ENCODE measurements at regions of chr4 and their contacts with region 1.

Region 1: GRCh38 chr4:166091912-166092510 is 219.0 kb downstream of the TLL1 start:
- ATAC-seq: peak in 4 of 8 experiments; percentile 27 to 50 (median 30)
- H3K4me3 ChIP-seq: no peak overlapping the region
- H3K27ac ChIP-seq: no peak overlapping the region
- H3K4me1 ChIP-seq: peaks cover 0 to 5% of the 10 kb centered on the region in 2 donors

Region 2: DNA sequence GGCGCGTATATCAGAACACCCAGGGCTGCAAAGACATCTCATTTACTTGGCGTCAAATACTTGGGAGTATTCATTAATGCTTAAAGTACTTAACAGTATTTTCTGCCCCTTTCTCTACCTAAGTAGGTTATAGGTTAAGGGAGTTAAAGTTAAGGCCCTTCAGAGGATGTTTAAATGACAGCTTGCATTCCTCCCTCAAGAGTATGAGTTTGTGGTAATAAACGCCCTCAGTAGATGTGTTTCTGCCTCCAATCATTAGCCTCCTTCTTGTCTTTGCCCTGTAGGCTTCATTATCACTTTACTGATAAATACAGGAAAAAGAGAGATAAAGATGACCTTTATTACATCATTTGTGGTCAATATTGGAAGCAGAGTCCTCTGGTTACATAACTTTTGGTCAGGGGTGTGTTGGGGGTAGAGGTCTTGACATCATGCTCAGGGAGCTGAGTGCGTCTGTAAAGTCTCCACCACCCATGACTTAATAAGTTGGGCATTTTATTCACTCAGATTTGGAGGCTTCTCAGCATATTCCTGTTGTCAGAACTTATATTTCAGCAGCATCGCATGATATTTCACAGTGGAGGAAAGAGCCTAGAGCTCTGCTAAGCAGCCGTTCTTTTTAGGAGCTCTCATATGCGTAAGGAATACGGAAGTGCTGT is 567.4 kb before region 1 on chr4:
- in situ Hi-C with region 1: loop called in 5 of 9 experiments (anchors 10 to 25 kb)
- ATAC-seq: no peak
- H3K4me3 ChIP-seq: no peak overlapping the region
- H3K27ac ChIP-seq: no peak overlapping the region
- H3K4me1 ChIP-seq: no peaks in the 10 kb centered on the region

Region 3: GRCh38 chr4:165537028-165537648 is 554.9 kb before region 1 on chr4:
- in situ Hi-C with region 1: loop called in 8 of 9 experiments (anchors 10 to 25 kb)
- ATAC-seq: peak in 2 of 8 experiments; percentile 25 to 47
- H3K4me3 ChIP-seq: no peak overlapping the region
- H3K27ac ChIP-seq: no peak overlapping the region
- H3K4me1 ChIP-seq: no peaks in the 10 kb centered on the region

Region 4: DNA sequence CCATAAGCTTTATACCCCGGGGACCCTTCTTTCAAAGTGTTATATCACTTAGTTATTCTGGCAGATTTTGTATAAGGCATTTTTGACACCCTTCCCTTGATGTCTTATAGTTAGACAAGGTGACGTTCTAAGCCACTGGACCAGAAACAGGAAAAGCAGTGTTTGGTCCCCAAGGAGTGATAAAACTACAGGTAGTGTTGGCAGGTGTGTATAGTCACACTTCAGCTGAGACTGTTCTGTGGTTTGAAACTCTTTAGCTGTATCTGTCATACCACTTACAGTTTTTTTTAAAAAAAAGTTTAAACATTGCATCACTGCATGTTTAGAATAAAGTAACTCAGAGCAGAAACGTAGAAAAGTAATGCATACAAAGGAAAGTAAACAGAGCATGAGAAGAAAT is 170.5 kb before region 1 on chr4:
- in situ Hi-C with region 1: no loop called
- ATAC-seq: no peak
- H3K4me3 ChIP-seq: no peak overlapping the region
- H3K27ac ChIP-seq: no peak overlapping the region
- H3K4me1 ChIP-seq: no peaks in the 10 kb centered on the region

Measured in motor neuron (in vitro differentiated cells).